ENCODE measurements at regions of chr16 and their contacts with region 1.

Region 1: GRCh38 chr16:81645266-81645694 is 133.8 kb upstream of the PLCG2 start:
- DNase-seq: no peak
- ATAC-seq: no peak
- H3K4me3 Mint-ChIP-seq: no peak overlapping the region
- H3K27ac Mint-ChIP-seq: no peak overlapping the region
- H3K4me1 Mint-ChIP-seq: peaks cover 8% of the 10 kb centered on the region
- H3K27me3 Mint-ChIP-seq: no peaks in the 10 kb centered on the region
- CTCF ChIP-seq: no peak

Region 2: GRCh38 chr16:81457326-81458133 is 187.8 kb before region 1 on chr16:
- CTCF ChIA-PET with region 1: no interaction called
- POLR2A ChIA-PET with region 1: interaction called, 10 read pairs
- intact Hi-C with region 1: no loop called
- DNase-seq: no peak
- ATAC-seq: peak; percentile 73
- H3K4me3 Mint-ChIP-seq: peak overlapping the region; percentile 11
- H3K27ac Mint-ChIP-seq: peak overlapping the region; percentile 66
- H3K4me1 Mint-ChIP-seq: peaks cover 73% of the 10 kb centered on the region
- H3K27me3 Mint-ChIP-seq: no peaks in the 10 kb centered on the region
- CTCF ChIP-seq: no peak